ENCODE measurements at regions of chr5 and their contacts with region 1.

Region 1: GRCh38 chr5:158695595-158696330 is 404.0 kb downstream of the EBF1 start:
- DNase-seq: peak; percentile 75
- H3K4me3 Mint-ChIP-seq: no peak overlapping the region
- H3K27ac Mint-ChIP-seq: no peak overlapping the region
- H3K4me1 Mint-ChIP-seq: peaks cover 2% of the 10 kb centered on the region
- H3K27me3 Mint-ChIP-seq: peaks cover 8% of the 10 kb centered on the region

Region 2: DNA sequence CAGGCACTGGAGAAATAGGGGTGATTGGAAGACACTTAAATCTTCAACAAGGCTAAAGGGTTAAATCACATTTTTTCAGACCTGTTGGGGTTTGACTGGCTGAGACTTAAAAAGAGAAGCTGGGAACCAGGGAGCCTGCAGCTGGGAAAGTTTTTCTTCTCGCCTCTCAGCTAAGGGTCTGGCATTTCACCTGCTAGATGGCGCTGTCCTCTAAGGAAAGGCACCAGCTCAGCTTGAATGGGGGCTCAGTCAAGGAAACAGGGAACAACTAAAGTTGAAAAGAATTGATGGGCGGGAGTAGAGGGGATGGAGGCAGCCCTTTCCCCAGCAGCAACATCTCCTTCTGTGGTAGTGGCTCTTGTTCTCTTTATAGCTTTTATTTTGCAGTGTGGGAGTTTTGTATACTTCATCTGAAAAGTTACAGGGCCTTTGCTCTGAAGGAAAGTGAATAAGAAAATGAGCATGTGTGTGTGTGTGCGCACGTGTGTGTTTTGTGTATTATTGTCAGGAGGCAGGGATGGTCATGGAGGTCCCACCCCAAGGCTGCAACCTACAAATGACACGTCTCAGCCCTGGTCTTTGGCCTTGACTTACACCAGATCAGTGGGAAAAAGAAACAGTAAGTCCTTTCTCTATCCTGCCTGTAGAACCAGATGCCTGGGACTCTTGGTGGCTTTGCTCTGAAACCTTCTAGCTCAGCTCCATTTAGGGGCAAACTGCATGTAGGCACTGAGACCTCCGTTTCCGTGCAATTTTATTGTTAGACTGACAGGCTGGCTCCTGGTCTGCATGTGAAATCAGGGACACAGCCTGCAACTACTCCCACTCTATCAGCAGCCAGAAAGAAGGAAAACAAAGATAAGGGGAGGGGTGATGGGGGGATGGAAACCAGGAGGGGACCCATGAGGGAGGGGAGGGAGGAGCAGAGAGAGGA is 520.6 kb before region 1 on chr5:
- CTCF ChIA-PET with region 1: interaction called, 10 read pairs
- POLR2A ChIA-PET with region 1: no interaction called
- intact Hi-C with region 1: loop called (anchors 5 kb)
- DNase-seq: peak; percentile 61
- H3K4me3 Mint-ChIP-seq: no peak overlapping the region
- H3K27ac Mint-ChIP-seq: no peak overlapping the region
- H3K4me1 Mint-ChIP-seq: no peaks in the 10 kb centered on the region
- H3K27me3 Mint-ChIP-seq: no peaks in the 10 kb centered on the region

Region 3: GRCh38 chr5:158796812-158797497 is 101.2 kb after region 1 on chr5:
- CTCF ChIA-PET with region 1: no interaction called
- POLR2A ChIA-PET with region 1: no interaction called
- intact Hi-C with region 1: no loop called
- DNase-seq: no peak
- H3K4me3 Mint-ChIP-seq: no peak overlapping the region
- H3K27ac Mint-ChIP-seq: no peak overlapping the region
- H3K4me1 Mint-ChIP-seq: no peaks in the 10 kb centered on the region
- H3K27me3 Mint-ChIP-seq: peaks cover 5% of the 10 kb centered on the region

Region 4: DNA sequence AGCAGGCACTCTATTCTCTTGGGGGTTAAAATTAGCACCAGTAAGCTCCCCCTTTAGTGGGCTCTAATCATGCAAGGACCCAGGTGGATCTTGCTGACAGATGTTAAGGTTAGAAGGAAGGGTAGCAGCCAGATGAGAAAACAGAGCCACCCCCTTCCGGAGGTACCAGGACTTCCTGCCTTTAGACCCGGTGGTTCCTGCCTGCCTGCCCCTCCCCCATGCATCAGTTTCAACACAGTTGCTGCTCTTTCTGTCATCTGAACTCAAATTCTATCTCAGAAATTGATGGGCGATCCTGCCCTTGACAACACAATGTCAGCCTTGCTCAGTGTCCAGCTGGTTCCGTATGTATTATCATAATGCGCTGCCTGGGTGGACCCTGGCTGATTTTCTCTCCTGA is 116.6 kb after region 1 on chr5:
- CTCF ChIA-PET with region 1: no interaction called
- POLR2A ChIA-PET with region 1: no interaction called
- intact Hi-C with region 1: no loop called
- DNase-seq: peak; percentile 68
- H3K4me3 Mint-ChIP-seq: peak overlapping the region; percentile 51
- H3K27ac Mint-ChIP-seq: peak overlapping the region; percentile 50
- H3K4me1 Mint-ChIP-seq: peaks cover 32% of the 10 kb centered on the region
- H3K27me3 Mint-ChIP-seq: peaks cover 2% of the 10 kb centered on the region

Region 5: GRCh38 chr5:159094745-159095144 is 399.0 kb after region 1 on chr5:
- CTCF ChIA-PET with region 1: interaction called, 26 read pairs
- POLR2A ChIA-PET with region 1: no interaction called
- intact Hi-C with region 1: no loop called
- DNase-seq: peak; percentile 55
- H3K4me3 Mint-ChIP-seq: no peak overlapping the region
- H3K27ac Mint-ChIP-seq: no peak overlapping the region
- H3K4me1 Mint-ChIP-seq: peaks cover 26% of the 10 kb centered on the region
- H3K27me3 Mint-ChIP-seq: peaks cover 31% of the 10 kb centered on the region

Region 6: DNA sequence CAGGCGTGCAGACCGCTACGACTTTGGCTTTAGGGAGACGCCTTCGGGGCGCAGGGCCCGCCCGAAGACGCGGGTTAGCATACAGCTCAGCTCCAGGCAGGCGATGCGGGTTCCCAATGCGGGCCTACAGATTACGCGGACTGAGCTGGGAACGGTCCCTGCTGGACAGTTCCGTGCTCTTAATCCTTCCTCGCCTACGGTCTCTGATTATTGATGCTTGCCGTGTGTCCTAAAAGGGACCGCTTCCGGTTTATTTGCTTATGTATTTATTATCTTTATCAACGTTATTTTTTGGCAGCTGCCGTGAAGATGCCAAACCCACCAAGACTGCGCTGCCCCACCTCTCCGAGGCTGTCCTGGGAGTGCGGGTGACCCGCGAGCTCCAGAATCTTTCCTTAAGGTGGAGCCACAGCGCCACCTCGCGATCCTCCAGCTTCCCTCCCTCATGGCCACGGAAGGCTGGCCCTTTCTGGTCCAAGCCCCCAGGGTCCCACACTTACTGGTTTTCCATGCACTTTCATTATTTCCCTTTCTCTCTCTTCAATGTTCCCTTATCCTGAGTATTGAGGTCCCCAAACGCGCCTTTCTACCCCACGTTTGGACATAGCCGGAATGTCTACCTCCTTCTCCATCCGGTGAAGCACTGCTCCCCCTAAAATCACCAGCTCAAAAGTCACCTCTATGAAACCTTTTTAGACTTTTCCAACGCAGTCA is 411.0 kb after region 1 on chr5:
- CTCF ChIA-PET with region 1: interaction called, 412 read pairs
- POLR2A ChIA-PET with region 1: interaction called, 4 read pairs
- intact Hi-C with region 1: loop called (anchors 1 kb)
- DNase-seq: peak; percentile 79
- H3K4me3 Mint-ChIP-seq: peak overlapping the region; percentile 61
- H3K27ac Mint-ChIP-seq: no peak overlapping the region
- H3K4me1 Mint-ChIP-seq: peaks cover 28% of the 10 kb centered on the region
- H3K27me3 Mint-ChIP-seq: peaks cover 50% of the 10 kb centered on the region

Region 7: DNA sequence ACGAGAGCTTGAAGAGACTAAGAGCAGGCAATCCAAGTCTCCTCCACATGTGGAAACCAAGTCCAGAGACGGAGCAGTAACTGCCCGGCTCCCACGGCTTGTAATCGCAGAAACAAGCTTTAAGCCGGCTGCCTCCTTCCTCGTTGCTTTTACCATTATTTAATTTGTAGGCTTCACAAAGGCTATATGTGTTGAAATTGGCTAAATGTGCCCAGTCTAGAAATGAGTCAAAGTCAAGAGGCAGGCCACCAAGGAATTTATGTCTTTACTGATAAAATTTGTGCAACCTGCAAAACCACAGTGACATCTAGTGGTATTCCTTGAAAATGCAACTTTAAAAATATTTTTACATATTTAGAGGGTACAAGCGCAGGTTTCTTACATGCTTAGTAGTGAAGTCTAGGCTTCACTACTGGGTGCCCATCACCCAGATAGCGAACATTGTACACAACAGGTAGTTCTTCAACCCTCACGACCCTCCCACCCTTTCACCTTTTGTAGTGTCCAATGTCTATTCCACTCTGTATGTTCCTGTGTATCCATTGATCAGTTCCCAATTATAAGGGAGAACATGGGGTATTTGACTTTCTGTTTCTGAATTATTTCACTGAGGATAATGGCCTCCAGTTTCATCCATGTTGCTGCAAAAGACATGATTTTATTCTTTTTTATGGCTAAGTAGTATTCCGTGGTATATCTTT is 437.4 kb after region 1 on chr5:
- CTCF ChIA-PET with region 1: interaction called, 58 read pairs
- POLR2A ChIA-PET with region 1: no interaction called
- intact Hi-C with region 1: loop called (anchors 1 kb)
- DNase-seq: no peak
- H3K4me3 Mint-ChIP-seq: no peak overlapping the region
- H3K27ac Mint-ChIP-seq: no peak overlapping the region
- H3K4me1 Mint-ChIP-seq: no peaks in the 10 kb centered on the region
- H3K27me3 Mint-ChIP-seq: peaks cover 1% of the 10 kb centered on the region